Activated CD8-positive, alpha-beta memory T cell treated with anti-CD3 and anti-CD28 coated beads, Interleukin-2, amount 10 ng/mL, durations not matched to agents 7 days and 5 days (primary cell): ENCODE measurements at regions of chr11 and their contacts with region 1.

Region 1: GRCh38 chr11:67401495-67402191 is at the start of gene PPP1CA:
- DNase-seq: peak; percentile 92
- ATAC-seq: peak; percentile 74
- H3K4me3 Mint-ChIP-seq: peak within 1 kb of the TSS; percentile 90
- H3K27ac Mint-ChIP-seq: peak within 1 kb of the TSS; percentile 86
- H3K4me1 Mint-ChIP-seq: peaks cover 65% of the 10 kb centered on the region
- H3K27me3 Mint-ChIP-seq: no peaks in the 10 kb centered on the region
- total RNA-seq, gene PPP1CA: 309 to 360 TPM

Region 2: DNA sequence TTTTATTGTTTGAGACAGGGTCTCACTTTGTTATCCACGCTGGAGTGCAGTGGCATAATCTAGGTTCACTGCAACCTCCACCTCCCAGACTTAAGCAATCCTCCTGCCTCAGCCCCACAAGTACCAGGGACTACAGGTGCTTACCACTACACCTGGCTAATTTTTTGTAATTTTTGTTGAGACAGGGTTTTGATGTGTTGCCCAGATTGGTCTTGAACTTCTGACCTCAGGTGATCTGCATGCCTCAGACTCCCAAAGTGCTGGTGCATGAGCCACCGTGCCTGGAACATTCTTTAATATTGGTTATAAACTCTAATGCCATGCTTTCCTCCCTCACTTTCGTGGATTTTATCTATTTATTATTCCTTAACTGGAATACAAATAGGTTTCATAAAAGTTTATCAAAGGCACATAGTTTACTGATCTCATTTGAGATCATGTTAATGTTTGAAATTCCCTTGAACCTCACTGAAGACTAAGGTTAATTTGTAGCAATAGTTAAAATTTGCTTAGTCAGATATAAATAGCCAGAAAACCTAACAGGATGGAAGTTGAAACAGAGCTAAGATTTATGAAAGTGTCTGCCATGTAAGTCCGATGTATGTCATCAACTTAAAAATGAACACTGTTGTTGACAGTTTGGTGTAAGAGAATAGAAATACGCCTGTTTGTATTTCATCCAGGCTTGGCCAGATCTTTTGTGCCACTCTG is 255.0 kb before region 1 on chr11:
- CTCF ChIA-PET with region 1: no interaction called
- DNase-seq: no peak
- ATAC-seq: no peak
- H3K4me3 Mint-ChIP-seq: no peak overlapping the region
- H3K27ac Mint-ChIP-seq: no peak overlapping the region
- H3K4me1 Mint-ChIP-seq: peaks cover 2% of the 10 kb centered on the region
- H3K27me3 Mint-ChIP-seq: no peaks in the 10 kb centered on the region

Region 3: GRCh38 chr11:67265633-67266423 is 135.8 kb before region 1 on chr11:
- CTCF ChIA-PET with region 1: interaction called, 10 read pairs
- DNase-seq: peak; percentile 82
- ATAC-seq: peak; percentile 48
- H3K4me3 Mint-ChIP-seq: peak overlapping the region; percentile 62
- H3K27ac Mint-ChIP-seq: peak overlapping the region; percentile 79
- H3K4me1 Mint-ChIP-seq: peaks cover 68% of the 10 kb centered on the region
- H3K27me3 Mint-ChIP-seq: peaks cover 4% of the 10 kb centered on the region

Region 4: DNA sequence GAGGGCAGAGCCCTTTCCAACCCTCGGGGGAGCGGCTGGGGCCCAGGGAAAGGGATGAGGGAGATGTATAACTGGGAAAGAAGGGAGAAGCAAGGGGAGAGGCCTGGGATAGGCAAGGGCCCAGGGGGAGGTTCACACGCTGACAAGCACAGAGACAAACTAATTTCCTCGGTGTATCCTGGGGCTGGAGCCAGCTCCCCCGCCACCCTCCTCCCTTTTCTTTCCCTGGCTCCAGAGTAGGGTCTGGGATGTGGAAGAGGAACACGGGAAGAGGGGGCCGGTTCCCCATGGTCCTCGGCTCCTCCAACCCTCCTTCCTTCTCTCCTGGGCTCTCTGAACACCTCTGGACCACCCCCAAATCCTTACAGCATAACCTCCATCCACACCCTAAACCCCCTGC is 35.1 kb before region 1 on chr11:
- CTCF ChIA-PET with region 1: no interaction called
- DNase-seq: no peak
- ATAC-seq: no peak
- H3K4me3 Mint-ChIP-seq: no peak overlapping the region
- H3K27ac Mint-ChIP-seq: no peak overlapping the region
- H3K4me1 Mint-ChIP-seq: peaks cover 43% of the 10 kb centered on the region
- H3K27me3 Mint-ChIP-seq: peaks cover 59% of the 10 kb centered on the region

Region 5: GRCh38 chr11:67382276-67383136 is 19.1 kb before region 1 on chr11:
- CTCF ChIA-PET with region 1: interaction called, 14 read pairs
- DNase-seq: peak; percentile 90
- ATAC-seq: peak; percentile 94
- H3K4me3 Mint-ChIP-seq: no peak overlapping the region
- H3K27ac Mint-ChIP-seq: no peak overlapping the region
- H3K4me1 Mint-ChIP-seq: peaks cover 5% of the 10 kb centered on the region
- H3K27me3 Mint-ChIP-seq: peaks cover 38% of the 10 kb centered on the region

Region 6: DNA sequence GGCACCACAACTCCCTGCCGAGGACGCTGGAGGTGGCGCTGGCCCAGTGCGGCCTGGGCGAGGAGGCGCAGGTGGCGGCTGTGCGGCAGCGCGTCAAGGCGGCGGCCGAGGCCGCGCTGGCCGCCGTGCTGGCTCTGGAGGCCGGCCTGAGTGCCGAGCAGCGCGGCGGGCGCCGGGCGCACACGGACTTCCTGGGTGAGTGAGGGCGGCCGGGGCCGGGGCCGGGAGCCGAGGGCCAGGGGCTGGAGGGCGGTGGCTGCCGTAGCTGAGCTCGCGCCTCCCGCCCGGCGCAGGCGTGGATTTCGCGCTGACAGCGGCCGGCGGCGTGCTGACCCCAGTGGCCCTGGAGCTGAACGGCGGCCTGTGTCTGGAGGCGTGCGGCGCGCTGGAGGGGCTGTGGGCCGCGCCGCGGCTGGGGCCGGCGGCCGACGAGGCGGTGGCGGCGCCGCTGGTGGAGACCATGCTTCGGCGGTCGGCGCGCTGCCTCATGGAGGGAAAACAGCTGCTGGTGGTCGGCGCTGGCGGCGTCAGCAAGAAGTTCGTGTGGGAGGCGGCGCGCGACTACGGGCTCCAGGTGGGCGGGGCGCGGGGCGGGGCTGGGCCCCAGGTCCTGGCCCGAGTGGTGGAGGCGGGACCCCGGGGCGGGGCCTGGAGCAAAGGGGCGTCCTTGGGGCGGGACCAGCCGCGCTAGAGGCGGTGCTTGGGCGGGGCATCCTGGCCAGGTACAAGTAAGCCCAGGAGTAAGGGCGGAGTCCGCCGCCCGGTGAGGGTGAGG is 19.2 kb after region 1 on chr11:
- CTCF ChIA-PET with region 1: interaction called, 88 read pairs
- DNase-seq: peak; percentile 98
- ATAC-seq: peak; percentile 93
- H3K4me3 Mint-ChIP-seq: peak overlapping the region; percentile 63
- H3K27ac Mint-ChIP-seq: peak overlapping the region; percentile 81
- H3K4me1 Mint-ChIP-seq: peaks cover 43% of the 10 kb centered on the region
- H3K27me3 Mint-ChIP-seq: peaks cover 7% of the 10 kb centered on the region

Region 7: GRCh38 chr11:67439321-67439883 is 37.8 kb after region 1 on chr11:
- CTCF ChIA-PET with region 1: interaction called, 96 read pairs
- DNase-seq: peak; percentile 59
- ATAC-seq: no peak
- H3K4me3 Mint-ChIP-seq: peak overlapping the region; percentile 95
- H3K27ac Mint-ChIP-seq: peak overlapping the region; percentile 93
- H3K4me1 Mint-ChIP-seq: peaks cover 54% of the 10 kb centered on the region
- H3K27me3 Mint-ChIP-seq: no peaks in the 10 kb centered on the region

Region 8: DNA sequence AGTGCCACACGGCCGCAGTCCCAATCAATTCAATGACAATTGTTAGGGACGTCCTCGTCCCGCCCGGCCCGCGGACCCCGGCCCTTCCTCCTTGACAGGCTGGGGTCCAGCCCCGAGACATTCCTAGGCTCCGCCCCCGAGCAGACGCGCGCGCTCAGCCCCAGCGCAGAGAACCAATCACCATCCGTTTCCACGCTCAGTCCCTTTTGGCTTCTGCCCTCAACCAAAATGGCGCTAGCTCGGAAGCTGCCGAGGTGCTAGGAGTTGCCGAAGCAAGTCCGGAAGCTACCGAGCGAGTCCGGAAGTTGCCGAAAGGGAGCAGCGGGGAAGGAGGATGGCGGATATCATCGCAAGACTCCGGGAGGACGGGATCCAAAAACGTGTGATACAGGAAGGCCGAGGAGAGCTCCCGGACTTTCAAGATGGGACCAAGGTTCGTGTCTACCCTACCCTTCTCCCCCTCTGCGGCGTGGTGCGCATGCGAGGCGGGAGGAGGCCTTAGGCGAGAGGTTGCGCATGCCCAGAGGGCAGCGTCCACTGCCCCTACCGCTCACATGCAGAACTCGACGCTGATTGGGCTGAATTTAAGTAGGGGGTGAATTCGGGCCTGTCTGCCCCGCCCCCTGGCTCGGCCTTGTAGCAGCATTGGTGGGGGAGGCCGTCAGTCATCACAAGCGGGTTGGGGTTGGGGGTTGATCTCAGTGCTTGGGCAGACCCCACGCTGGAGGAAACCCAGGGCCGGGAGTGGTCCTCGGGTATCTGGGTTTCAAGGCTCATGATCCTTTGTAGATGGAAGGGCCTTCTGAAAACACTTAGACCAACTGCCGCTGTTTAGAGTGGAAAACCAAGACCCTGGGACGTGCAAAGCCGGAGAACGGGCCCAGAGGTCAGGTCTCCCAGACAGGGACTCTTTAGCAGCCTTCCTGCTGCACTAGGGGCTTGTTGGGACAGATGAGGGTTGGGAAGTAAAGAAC is 81.5 kb after region 1 on chr11 and contains the start of gene AIP:
- CTCF ChIA-PET with region 1: interaction called, 16 read pairs
- DNase-seq: peak; percentile 99
- ATAC-seq: peak; percentile 81
- H3K4me3 Mint-ChIP-seq: peak within 1 kb of the TSS; percentile 80
- H3K27ac Mint-ChIP-seq: peak within 1 kb of the TSS; percentile 99
- H3K4me1 Mint-ChIP-seq: peaks cover 54% of the 10 kb centered on the region
- H3K27me3 Mint-ChIP-seq: peaks cover 4% of the 10 kb centered on the region
- total RNA-seq, gene AIP: 168 to 178 TPM